Activated naive CD4-positive, alpha-beta T cell treated with anti-CD3 and anti-CD28 coated beads for 36 hours (primary cell): ENCODE measurements at regions of chr14 and their contacts with region 1.

Region 1: DNA sequence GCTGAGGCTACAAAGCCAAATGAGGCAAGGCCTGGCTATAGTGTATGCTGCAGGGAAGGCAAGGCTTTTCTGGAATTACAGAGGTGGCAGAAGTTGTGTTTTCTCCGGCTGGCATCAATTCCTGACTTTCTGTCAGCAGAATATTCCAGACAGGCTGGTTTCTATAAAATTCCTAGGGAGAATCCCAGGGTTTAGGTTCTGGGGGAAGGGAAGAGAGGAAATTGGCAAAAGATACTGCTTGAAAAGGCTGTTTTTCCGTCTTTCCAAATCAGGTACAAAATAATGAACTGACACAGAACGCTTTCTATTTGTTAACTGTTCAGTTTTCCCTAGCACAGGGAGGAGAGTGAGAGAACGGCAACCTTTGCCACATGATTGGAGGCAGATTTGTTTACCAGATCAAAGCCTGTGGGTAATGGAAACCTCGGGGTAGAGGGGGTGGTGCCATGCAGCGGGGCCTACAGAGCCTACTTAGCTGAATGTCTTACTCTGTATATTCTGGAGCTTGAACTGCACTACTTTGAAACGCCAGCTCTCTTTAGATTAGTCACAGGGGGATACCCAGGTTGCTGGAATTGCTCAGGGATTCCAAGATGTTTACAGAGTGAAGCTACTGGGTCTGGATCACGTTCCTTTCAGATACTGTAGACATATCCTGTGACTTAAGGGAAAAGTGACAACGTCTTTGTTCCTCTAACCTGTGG is 65.8 kb upstream of the DACT1 start:
- DNase-seq: peak; percentile 78
- H3K4me3 Mint-ChIP-seq: peak overlapping the region; percentile 61
- H3K27ac Mint-ChIP-seq: peak overlapping the region; percentile 95
- H3K4me1 Mint-ChIP-seq: peaks cover 55% of the 10 kb centered on the region
- H3K27me3 Mint-ChIP-seq: no peaks in the 10 kb centered on the region

Region 2: DNA sequence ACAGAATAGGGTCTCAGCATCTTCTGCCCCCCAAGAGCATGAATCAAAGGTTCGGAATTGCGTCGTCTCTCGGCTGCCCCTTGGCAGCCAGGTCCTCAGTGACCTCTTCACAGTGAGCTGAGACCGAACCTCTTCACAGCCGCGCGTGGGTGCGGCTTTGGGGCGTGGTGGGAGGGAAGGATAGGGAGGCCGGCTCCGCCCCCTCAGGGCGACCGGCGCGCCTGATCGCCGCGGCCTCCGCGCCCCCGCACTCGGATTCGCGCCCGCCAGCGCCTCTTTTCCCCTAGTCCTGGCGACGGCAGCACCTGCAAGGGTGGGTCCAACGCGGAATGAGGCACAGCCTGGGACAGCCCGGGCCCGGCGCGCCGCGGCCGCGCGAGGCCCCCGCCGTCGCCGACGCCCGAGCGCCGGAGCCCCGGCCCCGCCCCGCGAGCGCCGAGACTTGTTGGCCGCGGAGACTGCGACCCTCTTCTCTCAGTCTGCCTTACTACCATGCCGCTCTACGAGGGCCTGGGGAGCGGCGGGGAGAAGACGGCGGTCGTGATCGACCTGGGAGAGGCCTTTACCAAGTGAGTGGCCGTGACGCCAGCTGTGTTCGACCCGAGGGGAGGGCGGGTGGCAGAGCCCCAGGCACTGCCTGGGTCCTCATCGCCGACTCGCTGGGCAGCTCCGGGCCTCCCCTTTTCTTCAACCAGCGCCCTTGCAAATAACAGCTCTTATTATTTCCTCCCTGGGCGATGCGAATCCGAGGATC is 372.0 kb before region 1 on chr14 and contains the start of gene ACTR10:
- CTCF ChIA-PET with region 1: no interaction called
- intact Hi-C with region 1: loop called (anchors 5 kb)
- DNase-seq: peak; percentile 89
- H3K4me3 Mint-ChIP-seq: peak within 1 kb of the TSS; percentile 93
- H3K27ac Mint-ChIP-seq: peak within 1 kb of the TSS; percentile 87
- H3K4me1 Mint-ChIP-seq: peaks cover 39% of the 10 kb centered on the region
- H3K27me3 Mint-ChIP-seq: no peaks in the 10 kb centered on the region
- total RNA-seq, gene ACTR10: 29.5 to 29.7 TPM

Region 3: GRCh38 chr14:58280954-58281787 is 290.8 kb before region 1 on chr14:
- CTCF ChIA-PET with region 1: no interaction called
- intact Hi-C with region 1: loop called (anchors 1 kb)
- DNase-seq: peak; percentile 66
- H3K4me3 Mint-ChIP-seq: peak overlapping the region; percentile 70
- H3K27ac Mint-ChIP-seq: peak overlapping the region; percentile 99
- H3K4me1 Mint-ChIP-seq: peaks cover 68% of the 10 kb centered on the region
- H3K27me3 Mint-ChIP-seq: no peaks in the 10 kb centered on the region

Region 4: GRCh38 chr14:58427281-58428117 is 144.4 kb before region 1 on chr14 and contains the starts of genes KIAA0586 and TIMM9:
- CTCF ChIA-PET with region 1: no interaction called
- intact Hi-C with region 1: loop called (anchors 1 kb)
- DNase-seq: peak; percentile 98
- H3K4me3 Mint-ChIP-seq: peak within 1 kb of the TSS; percentile 88
- H3K27ac Mint-ChIP-seq: peak within 1 kb of the TSS; percentile 99
- H3K4me1 Mint-ChIP-seq: peaks cover 48% of the 10 kb centered on the region
- H3K27me3 Mint-ChIP-seq: no peaks in the 10 kb centered on the region
- total RNA-seq, gene KIAA0586: 40.4 to 41.8 TPM
- total RNA-seq, gene TIMM9: 60.7 to 64.4 TPM

Region 5: GRCh38 chr14:58488550-58488949 is 83.4 kb before region 1 on chr14:
- CTCF ChIA-PET with region 1: no interaction called
- intact Hi-C with region 1: no loop called
- DNase-seq: peak; percentile 14
- H3K4me3 Mint-ChIP-seq: no peak overlapping the region
- H3K27ac Mint-ChIP-seq: no peak overlapping the region
- H3K4me1 Mint-ChIP-seq: peaks cover 5% of the 10 kb centered on the region
- H3K27me3 Mint-ChIP-seq: no peaks in the 10 kb centered on the region

Region 6: DNA sequence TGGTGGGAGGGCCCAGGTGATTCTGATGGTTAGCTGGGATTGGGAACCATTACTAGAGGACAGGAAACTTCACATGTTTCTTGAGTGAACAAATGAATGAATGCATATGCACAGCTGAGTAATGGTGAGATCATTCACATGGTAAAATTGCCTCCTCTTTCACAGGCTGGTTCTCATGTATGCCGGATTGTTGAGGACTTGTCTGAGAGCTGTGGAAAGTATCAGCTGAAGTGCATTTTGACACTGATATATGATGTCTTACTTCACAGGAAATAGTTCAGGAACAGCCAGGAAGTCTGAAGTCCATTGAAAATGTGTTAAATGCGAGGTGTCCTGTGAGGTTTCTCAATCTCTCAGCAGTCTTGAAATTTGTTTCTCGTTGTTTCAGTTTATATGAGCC is 11.7 kb before region 1 on chr14:
- CTCF ChIA-PET with region 1: interaction called, 7 read pairs
- intact Hi-C with region 1: loop called (anchors 1 kb)
- DNase-seq: no peak
- H3K4me3 Mint-ChIP-seq: no peak overlapping the region
- H3K27ac Mint-ChIP-seq: peak overlapping the region; percentile 44
- H3K4me1 Mint-ChIP-seq: peaks cover 14% of the 10 kb centered on the region
- H3K27me3 Mint-ChIP-seq: no peaks in the 10 kb centered on the region

Region 7: GRCh38 chr14:59189786-59190771 is 618.2 kb after region 1 on chr14:
- CTCF ChIA-PET with region 1: no interaction called
- intact Hi-C with region 1: loop called (anchors 2 kb)
- DNase-seq: peak; percentile 77
- H3K4me3 Mint-ChIP-seq: peak overlapping the region; percentile 91
- H3K27ac Mint-ChIP-seq: no peak overlapping the region
- H3K4me1 Mint-ChIP-seq: peaks cover 13% of the 10 kb centered on the region
- H3K27me3 Mint-ChIP-seq: no peaks in the 10 kb centered on the region